H1 (cell line): ENCODE measurements at regions of chr2 and their contacts with region 1.

Region 1: GRCh38 chr2:102020596-102021181 is 28.9 kb downstream of the IL1R2 start:
- DNase-seq: peak; percentile 64 to 94
- H3K4me3 ChIP-seq: no peak overlapping the region
- H3K27ac ChIP-seq: no peak overlapping the region
- H3K4me1 ChIP-seq: peaks cover 0 to 3% (median 0%) of the 10 kb centered on the region in 4 experiments; a peak in 1 of 7 replicates
- H3K27me3 ChIP-seq: no peaks in the 10 kb centered on the region
- CTCF ChIP-seq: peak; percentile 92 to 98 (median 98)
- EP300 ChIP-seq: no peak
- POLR2A ChIP-seq: no peak
- RAD21 ChIP-seq: peak; percentile 96 to 97

Region 2: GRCh38 chr2:101983928-101984327 is 36.8 kb before region 1 on chr2:
- CTCF ChIA-PET with region 1: no interaction called
- POLR2A ChIA-PET with region 1: no interaction called
- DNase-seq: no peak
- H3K4me3 ChIP-seq: no peak overlapping the region
- H3K27ac ChIP-seq: no peak overlapping the region
- H3K4me1 ChIP-seq: peaks cover 0 to 7% (median 0%) of the 10 kb centered on the region in 4 experiments; a peak in 3 of 7 replicates
- H3K27me3 ChIP-seq: no peaks in the 10 kb centered on the region
- CTCF ChIP-seq: peak in 2 of 3 experiments; percentile 32 to 33; a peak in 2 of 4 replicates
- EP300 ChIP-seq: no peak
- POLR2A ChIP-seq: no peak
- RAD21 ChIP-seq: peak; percentile 46 to 52

Region 3: GRCh38 chr2:102005989-102006885 is 14.5 kb before region 1 on chr2:
- CTCF ChIA-PET with region 1: interaction called, 48 read pairs
- POLR2A ChIA-PET with region 1: no interaction called
- DNase-seq: peak; percentile 9 to 67
- H3K4me3 ChIP-seq: no peak overlapping the region
- H3K27ac ChIP-seq: no peak overlapping the region
- H3K4me1 ChIP-seq: no peaks in the 10 kb centered on the region
- H3K27me3 ChIP-seq: no peaks in the 10 kb centered on the region; a peak in 2 of 7 replicates
- CTCF ChIP-seq: peak; percentile 48 to 84 (median 74)
- EP300 ChIP-seq: no peak
- POLR2A ChIP-seq: no peak
- RAD21 ChIP-seq: peak; percentile 70 to 80

Region 4: DNA sequence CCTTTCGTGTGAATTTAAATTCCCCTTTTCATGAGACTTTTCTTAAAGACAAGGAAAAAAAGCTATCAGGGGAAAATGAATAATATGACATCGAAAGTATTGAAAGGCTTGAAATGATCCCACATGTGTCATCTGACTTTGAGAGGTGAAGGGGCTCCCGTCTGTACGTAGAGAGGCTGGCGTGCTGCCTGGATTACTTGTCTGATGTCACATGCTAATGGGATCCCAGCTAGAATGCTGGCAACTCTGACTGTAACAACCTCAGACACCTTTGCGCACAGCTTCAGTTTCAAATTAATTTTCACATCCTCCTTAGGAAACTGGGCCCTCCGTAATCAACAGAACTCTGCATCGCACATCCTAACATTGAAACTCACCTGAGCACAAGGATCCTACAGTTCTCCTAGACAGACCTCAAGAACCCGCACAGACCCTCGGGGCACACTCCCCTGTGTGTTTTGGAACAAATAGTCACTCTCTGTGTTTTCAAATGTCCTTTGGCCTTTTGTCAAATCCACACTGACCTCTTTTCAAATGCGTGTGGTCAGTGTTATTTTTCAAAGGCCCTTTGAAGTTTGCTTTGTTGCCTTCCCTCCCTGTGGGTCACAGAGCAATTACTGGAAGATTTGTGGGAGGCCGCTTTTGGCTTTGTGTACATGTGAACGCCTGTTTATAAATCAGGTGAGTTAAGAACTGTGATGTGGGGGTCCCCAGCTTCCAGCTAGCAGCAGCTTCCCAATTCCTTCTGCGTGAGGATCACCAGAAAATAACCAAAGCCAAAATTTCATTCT is 37.0 kb after region 1 on chr2:
- CTCF ChIA-PET with region 1: interaction called, 12 read pairs
- POLR2A ChIA-PET with region 1: no interaction called
- DNase-seq: no peak
- H3K4me3 ChIP-seq: no peak overlapping the region
- H3K27ac ChIP-seq: no peak overlapping the region
- H3K4me1 ChIP-seq: no peaks in the 10 kb centered on the region
- H3K27me3 ChIP-seq: no peaks in the 10 kb centered on the region
- CTCF ChIP-seq: no peak
- EP300 ChIP-seq: no peak
- POLR2A ChIP-seq: no peak
- RAD21 ChIP-seq: no peak

Region 5: DNA sequence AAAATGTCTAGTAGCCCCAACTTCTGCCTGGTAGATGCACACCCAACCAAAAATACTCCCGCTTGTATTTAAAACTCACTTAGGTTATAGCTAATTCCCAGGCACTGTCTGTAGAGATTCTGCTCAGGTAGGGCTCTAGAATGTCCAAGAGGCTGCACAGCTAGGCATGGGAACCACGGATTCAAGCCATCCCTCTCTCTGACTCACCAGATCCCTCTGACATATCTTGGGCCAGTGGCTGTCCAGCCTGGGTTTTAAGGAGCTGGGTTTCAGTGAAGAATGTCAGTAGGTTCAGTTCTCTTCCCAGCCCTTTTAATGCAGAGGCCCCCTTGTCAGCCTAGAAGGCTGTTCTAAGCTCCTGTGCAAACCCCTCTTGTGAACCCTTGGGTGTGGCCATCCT is 106.0 kb after region 1 on chr2:
- CTCF ChIA-PET with region 1: interaction called, 10 read pairs
- POLR2A ChIA-PET with region 1: no interaction called
- DNase-seq: no peak
- H3K4me3 ChIP-seq: no peak overlapping the region
- H3K27ac ChIP-seq: no peak overlapping the region
- H3K4me1 ChIP-seq: no peaks in the 10 kb centered on the region
- H3K27me3 ChIP-seq: no peaks in the 10 kb centered on the region
- CTCF ChIP-seq: no peak
- EP300 ChIP-seq: no peak
- POLR2A ChIP-seq: no peak
- RAD21 ChIP-seq: no peak

Region 6: GRCh38 chr2:102166189-102166845 is 145.6 kb after region 1 on chr2:
- CTCF ChIA-PET with region 1: interaction called, 42 read pairs
- POLR2A ChIA-PET with region 1: no interaction called
- DNase-seq: no peak
- H3K4me3 ChIP-seq: no peak overlapping the region
- H3K27ac ChIP-seq: no peak overlapping the region
- H3K4me1 ChIP-seq: no peaks in the 10 kb centered on the region
- H3K27me3 ChIP-seq: no peaks in the 10 kb centered on the region
- CTCF ChIP-seq: peak; percentile 7 to 60 (median 60)
- EP300 ChIP-seq: no peak
- POLR2A ChIP-seq: no peak
- RAD21 ChIP-seq: peak; percentile 69 to 82

Region 7: GRCh38 chr2:102240640-102241370 is 220.1 kb after region 1 on chr2:
- CTCF ChIA-PET with region 1: interaction called, 42 read pairs
- POLR2A ChIA-PET with region 1: no interaction called
- DNase-seq: peak; percentile 84 to 93
- H3K4me3 ChIP-seq: no peak overlapping the region
- H3K27ac ChIP-seq: no peak overlapping the region
- H3K4me1 ChIP-seq: no peaks in the 10 kb centered on the region
- H3K27me3 ChIP-seq: no peaks in the 10 kb centered on the region
- CTCF ChIP-seq: peak; percentile 94 to 97 (median 97)
- EP300 ChIP-seq: 0 out of 3 replicates have a peak, but pooled peaks of 1 of the 2 experiments have one; percentile 30
- POLR2A ChIP-seq: no peak
- RAD21 ChIP-seq: peak; percentile 90

Region 8: GRCh38 chr2:102304268-102304667 is 283.6 kb after region 1 on chr2:
- CTCF ChIA-PET with region 1: no interaction called
- POLR2A ChIA-PET with region 1: no interaction called
- DNase-seq: no peak
- H3K4me3 ChIP-seq: no peak overlapping the region
- H3K27ac ChIP-seq: no peak overlapping the region
- H3K4me1 ChIP-seq: no peaks in the 10 kb centered on the region
- H3K27me3 ChIP-seq: no peaks in the 10 kb centered on the region
- CTCF ChIP-seq: no peak
- EP300 ChIP-seq: no peak
- POLR2A ChIP-seq: no peak
- RAD21 ChIP-seq: no peak